ENCODE measurements at regions of chr12 and their contacts with region 1.

Region 1: DNA sequence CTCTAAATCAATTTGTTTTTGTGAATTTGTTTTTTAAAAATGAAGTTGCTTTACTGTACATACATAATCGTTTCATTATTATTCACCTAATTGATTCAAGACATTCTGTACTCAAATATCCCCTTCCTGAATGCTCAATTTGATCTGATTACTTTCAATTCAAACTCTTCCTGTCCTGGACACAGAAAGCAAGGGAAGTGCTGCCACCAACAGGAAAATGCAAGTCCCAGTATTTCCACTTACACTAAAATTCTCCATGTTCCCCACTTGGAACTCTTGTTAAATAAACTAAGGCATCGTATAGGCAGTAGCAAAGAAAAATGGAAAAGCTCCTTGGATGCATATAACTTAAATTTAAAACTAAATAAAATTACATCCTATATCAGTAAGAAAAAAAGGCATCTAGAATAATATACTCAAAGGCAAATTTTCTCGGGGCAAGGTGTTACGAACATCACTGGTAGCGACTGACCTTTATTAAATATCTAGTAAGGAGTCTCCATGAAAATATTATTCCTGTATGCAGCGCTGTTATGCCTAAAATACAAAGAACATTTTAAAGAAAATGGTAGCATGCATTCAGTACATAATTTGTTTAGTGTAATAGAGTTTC is 72.0 kb upstream of the DBX2 start:
- DNase-seq: peak in 1 of 2 experiments; percentile 26
- H3K4me3 ChIP-seq: no peak overlapping the region
- H3K4me3 Mint-ChIP-seq: no peak overlapping the region
- H3K27ac Mint-ChIP-seq: no peak overlapping the region
- H3K4me1 ChIP-seq: no peaks in the 10 kb centered on the region
- H3K4me1 Mint-ChIP-seq: no peaks in the 10 kb centered on the region
- H3K27me3 ChIP-seq: no peaks in the 10 kb centered on the region
- H3K27me3 Mint-ChIP-seq: peaks cover 3% of the 10 kb centered on the region
- CTCF ChIP-seq: peak; percentile 31 to 66

Region 2: GRCh38 chr12:44774815-44775411 is 348.0 kb before region 1 on chr12:
- CTCF ChIA-PET with region 1: no interaction called
- POLR2A ChIA-PET with region 1: no interaction called
- intact Hi-C with region 1: loop called (anchors 2 kb)
- DNase-seq: peak; percentile 53 to 74
- H3K4me3 ChIP-seq: no peak overlapping the region
- H3K4me3 Mint-ChIP-seq: no peak overlapping the region
- H3K27ac Mint-ChIP-seq: no peak overlapping the region
- H3K4me1 ChIP-seq: no peaks in the 10 kb centered on the region
- H3K4me1 Mint-ChIP-seq: no peaks in the 10 kb centered on the region
- H3K27me3 ChIP-seq: no peaks in the 10 kb centered on the region; the same call in 1 of the 2 replicates
- H3K27me3 Mint-ChIP-seq: peaks cover 1% of the 10 kb centered on the region
- CTCF ChIP-seq: peak; percentile 89 to 93

Region 3: DNA sequence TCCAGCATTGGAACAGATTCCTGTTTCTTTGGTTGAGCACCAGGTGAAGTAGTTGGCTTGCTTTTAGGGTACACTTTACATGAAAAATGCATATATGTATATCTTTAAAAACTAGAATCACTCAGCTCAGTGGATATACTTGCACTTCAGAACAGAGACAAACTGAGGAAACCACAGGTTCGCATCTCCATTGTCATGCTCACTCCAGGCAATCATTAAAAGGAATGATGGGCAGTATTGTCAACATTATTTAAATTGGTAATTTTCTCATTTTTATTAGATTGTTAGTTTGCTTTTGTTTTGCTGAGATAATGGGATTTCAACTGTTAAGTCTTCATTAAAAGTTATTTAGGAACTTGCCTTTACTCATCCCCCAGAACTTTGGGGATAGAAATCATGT is 175.7 kb before region 1 on chr12:
- CTCF ChIA-PET with region 1: interaction called, 3 read pairs
- POLR2A ChIA-PET with region 1: no interaction called
- intact Hi-C with region 1: loop called (anchors 5 kb)
- DNase-seq: no peak
- H3K4me3 ChIP-seq: no peak overlapping the region
- H3K4me3 Mint-ChIP-seq: no peak overlapping the region
- H3K27ac Mint-ChIP-seq: no peak overlapping the region
- H3K4me1 ChIP-seq: peaks cover 10% of the 10 kb centered on the region; the same call in 1 of the 2 replicates
- H3K4me1 Mint-ChIP-seq: peaks cover 9% of the 10 kb centered on the region
- H3K27me3 ChIP-seq: no peaks in the 10 kb centered on the region
- H3K27me3 Mint-ChIP-seq: peaks cover 5% of the 10 kb centered on the region
- CTCF ChIP-seq: no peak

Region 4: DNA sequence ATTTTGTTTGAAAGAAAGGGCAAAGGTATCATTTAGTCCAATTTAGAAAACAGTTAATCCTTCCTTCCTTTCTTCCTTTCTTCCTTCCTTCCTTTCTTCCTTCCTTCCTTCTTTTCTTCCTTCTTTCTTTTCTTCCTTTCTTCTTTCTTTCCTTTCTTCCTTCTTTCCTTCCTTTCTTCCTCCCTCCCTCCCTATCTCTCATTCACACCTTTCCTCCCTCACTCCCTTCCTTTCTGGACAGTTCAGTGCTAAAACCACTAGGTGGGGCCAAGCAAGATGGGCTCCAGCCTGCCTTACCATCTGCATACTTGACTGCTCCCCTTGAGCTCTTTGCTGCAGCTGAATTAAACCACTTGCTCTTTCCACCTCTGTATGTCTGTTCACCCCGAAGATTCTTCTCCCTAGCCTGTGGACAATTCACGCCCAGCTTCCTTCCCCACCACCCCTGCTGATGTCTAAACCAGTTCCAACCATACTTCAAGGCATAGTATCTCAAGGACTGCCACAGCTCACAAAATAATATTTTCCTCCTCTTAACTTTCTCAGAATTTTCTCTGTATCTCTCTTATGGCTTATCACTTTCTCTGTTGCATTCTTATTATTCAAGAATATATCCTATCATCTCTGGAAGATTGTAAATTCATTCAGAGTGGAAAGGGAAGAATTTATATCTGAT is 150.0 kb before region 1 on chr12:
- CTCF ChIA-PET with region 1: interaction called, 6 read pairs
- POLR2A ChIA-PET with region 1: no interaction called
- intact Hi-C with region 1: loop called (anchors 1 kb)
- DNase-seq: peak; percentile 42 to 55
- H3K4me3 ChIP-seq: no peak overlapping the region
- H3K4me3 Mint-ChIP-seq: no peak overlapping the region
- H3K27ac Mint-ChIP-seq: no peak overlapping the region
- H3K4me1 ChIP-seq: no peaks in the 10 kb centered on the region
- H3K4me1 Mint-ChIP-seq: no peaks in the 10 kb centered on the region
- H3K27me3 ChIP-seq: no peaks in the 10 kb centered on the region
- H3K27me3 Mint-ChIP-seq: peaks cover 3% of the 10 kb centered on the region
- CTCF ChIP-seq: peak; percentile 61 to 83

Region 5: GRCh38 chr12:45034861-45035265 is 88.0 kb before region 1 on chr12:
- CTCF ChIA-PET with region 1: no interaction called
- POLR2A ChIA-PET with region 1: no interaction called
- intact Hi-C with region 1: loop called (anchors 5 kb)
- DNase-seq: no peak
- H3K4me3 ChIP-seq: no peak overlapping the region
- H3K4me3 Mint-ChIP-seq: peak overlapping the region; percentile 31
- H3K27ac Mint-ChIP-seq: no peak overlapping the region
- H3K4me1 ChIP-seq: no peaks in the 10 kb centered on the region
- H3K4me1 Mint-ChIP-seq: no peaks in the 10 kb centered on the region
- H3K27me3 ChIP-seq: peaks cover 2% of the 10 kb centered on the region; the same call in 1 of the 2 replicates
- H3K27me3 Mint-ChIP-seq: peaks cover 7% of the 10 kb centered on the region
- CTCF ChIP-seq: no peak